Gastrocnemius medialis (tissue), 4 donors: ENCODE measurements at regions of chr6 and their contacts with region 1.

Region 1: GRCh38 chr6:111873178-111874024 is at the start of gene FYN:
- DNase-seq: peak; percentile 93 to 96
- ATAC-seq: peak; percentile 95 to 98
- H3K4me3 ChIP-seq: peak within 1 kb of the TSS; percentile 46 to 72 (median 62)
- H3K27ac ChIP-seq: peak within 1 kb of the TSS; percentile 36 to 79 (median 72)
- H3K4me1 ChIP-seq: peaks cover 4 to 5% of the 10 kb centered on the region in 2 donors
- H3K27me3 ChIP-seq: peaks cover 0 to 35% (median 15%) of the 10 kb centered on the region in 3 donors
- CTCF ChIP-seq: peak; percentile 51 to 64 (median 53)
- POLR2A ChIP-seq: peak; percentile 67 to 88
- total RNA-seq, gene FYN: 9.2 to 36.8 (median 17.0) TPM

Region 2: GRCh38 chr6:110873981-110874879 is 999.2 kb before region 1 on chr6 and contains the start of gene AMD1:
- in situ Hi-C with region 1: no loop called
- intact Hi-C with region 1: loop called (anchors 5 kb)
- DNase-seq: peak; percentile 98
- ATAC-seq: peak; percentile 71 to 79
- H3K4me3 ChIP-seq: peak within 1 kb of the TSS; percentile 79 to 94 (median 87)
- H3K27ac ChIP-seq: peak within 1 kb of the TSS; percentile 92 to 97 (median 96)
- H3K4me1 ChIP-seq: peaks cover 24 to 29% of the 10 kb centered on the region in 2 donors
- H3K27me3 ChIP-seq: no peaks in the 10 kb centered on the region
- CTCF ChIP-seq: no peak
- POLR2A ChIP-seq: peak; percentile 99
- total RNA-seq, gene AMD1: 33.5 to 57.1 (median 45.1) TPM

Region 3: DNA sequence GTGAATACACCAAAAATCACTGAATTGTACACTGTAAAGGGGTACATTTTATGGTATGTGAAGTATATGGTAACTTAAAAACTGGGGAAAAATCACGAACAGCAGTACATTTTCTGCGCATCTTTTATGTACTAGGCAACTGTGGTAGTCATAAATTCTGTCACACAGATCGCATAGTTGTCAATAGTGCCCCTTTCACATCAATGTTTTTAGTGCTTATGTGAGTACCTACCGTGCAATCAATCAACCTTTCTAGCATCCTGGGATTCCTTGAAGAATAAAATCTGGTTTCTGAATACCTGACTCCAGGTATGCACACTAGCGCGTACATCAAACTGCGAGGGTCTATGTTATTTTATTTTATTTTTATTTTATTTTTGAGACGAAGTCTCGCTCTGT is 892.2 kb before region 1 on chr6:
- in situ Hi-C with region 1: no loop called
- intact Hi-C with region 1: loop called (anchors 2 kb)
- DNase-seq: no peak
- ATAC-seq: no peak
- H3K4me3 ChIP-seq: peak overlapping the region; percentile 90 to 96 (median 93)
- H3K27ac ChIP-seq: peak overlapping the region; percentile 79 to 94 (median 89)
- H3K4me1 ChIP-seq: peaks cover 0 to 9% of the 10 kb centered on the region in 2 donors
- H3K27me3 ChIP-seq: no peaks in the 10 kb centered on the region
- CTCF ChIP-seq: no peak
- POLR2A ChIP-seq: no peak

Region 4: GRCh38 chr6:111709615-111710398 is 163.6 kb before region 1 on chr6:
- in situ Hi-C with region 1: no loop called
- intact Hi-C with region 1: loop called (anchors 1 kb)
- DNase-seq: peak; percentile 52 to 67
- ATAC-seq: peak; percentile 84 to 90
- H3K4me3 ChIP-seq: peak overlapping the region; percentile 30 to 48 (median 41)
- H3K27ac ChIP-seq: peak overlapping the region in 3 of 4 donors; percentile 57 to 67 (median 60)
- H3K4me1 ChIP-seq: peaks cover 28 to 31% of the 10 kb centered on the region in 2 donors
- H3K27me3 ChIP-seq: no peaks in the 10 kb centered on the region
- CTCF ChIP-seq: peak; percentile 73 to 83 (median 80)
- POLR2A ChIP-seq: no peak

Region 5: DNA sequence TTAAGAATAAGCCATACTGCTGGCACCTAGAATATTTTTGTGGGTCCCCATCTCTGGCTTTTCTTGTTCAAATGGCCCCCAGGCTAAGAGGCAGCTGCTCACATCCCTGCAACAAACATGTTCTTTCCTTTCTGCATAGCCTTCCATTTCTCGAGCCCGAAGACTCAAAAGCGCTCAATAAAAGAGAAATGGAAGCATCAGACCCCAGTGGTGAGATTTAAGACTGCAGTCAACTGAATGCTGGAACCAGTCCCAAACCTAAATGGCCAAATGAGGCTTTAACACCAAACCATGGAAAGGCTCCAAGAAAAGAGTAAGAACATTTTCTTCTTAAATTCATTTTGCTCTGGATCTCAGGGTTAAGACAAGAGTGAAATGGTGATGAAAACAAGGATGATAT is 145.6 kb before region 1 on chr6:
- in situ Hi-C with region 1: loop called in 1 of 4 experiments (anchors 25 kb)
- intact Hi-C with region 1: no loop called
- DNase-seq: no peak
- ATAC-seq: no peak
- H3K4me3 ChIP-seq: no peak overlapping the region
- H3K27ac ChIP-seq: no peak overlapping the region
- H3K4me1 ChIP-seq: peaks cover 5 to 12% of the 10 kb centered on the region in 2 donors
- H3K27me3 ChIP-seq: no peaks in the 10 kb centered on the region
- CTCF ChIP-seq: peak in 4 of 5 experiments; percentile 18 to 40 (median 27)
- POLR2A ChIP-seq: no peak

Region 6: GRCh38 chr6:111888928-111889695 is 15.7 kb after region 1 on chr6:
- in situ Hi-C with region 1: no loop called
- intact Hi-C with region 1: no loop called
- DNase-seq: no peak
- ATAC-seq: no peak
- H3K4me3 ChIP-seq: peak overlapping the region in 2 of 4 donors; percentile 17 to 24
- H3K27ac ChIP-seq: no peak overlapping the region
- H3K4me1 ChIP-seq: no peaks in the 10 kb centered on the region
- H3K27me3 ChIP-seq: no peaks in the 10 kb centered on the region
- CTCF ChIP-seq: no peak
- POLR2A ChIP-seq: no peak

Region 7: DNA sequence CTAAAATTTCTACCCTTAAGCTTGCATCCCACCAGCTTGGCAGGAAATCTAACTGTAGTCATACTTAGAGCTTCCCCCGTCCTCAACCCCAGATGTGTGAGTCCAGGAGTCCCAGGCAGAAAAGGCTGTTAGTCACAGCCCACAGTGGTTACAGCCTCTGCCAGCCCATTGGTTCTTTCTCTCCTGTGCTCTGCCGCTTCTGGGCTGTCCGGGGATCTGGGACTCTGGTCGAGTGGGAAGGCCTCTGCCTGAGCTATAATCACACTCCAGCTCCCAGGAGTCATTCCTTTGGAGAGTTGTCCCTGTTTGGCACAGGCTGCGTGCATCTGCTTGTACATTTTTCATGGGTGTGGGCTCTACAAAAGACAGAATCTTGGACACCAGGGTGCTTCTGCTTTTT is 45.4 kb after region 1 on chr6:
- in situ Hi-C with region 1: no loop called
- intact Hi-C with region 1: no loop called
- DNase-seq: peak in 1 of 2 donors; percentile 25
- ATAC-seq: peak; percentile 36
- H3K4me3 ChIP-seq: no peak overlapping the region
- H3K27ac ChIP-seq: no peak overlapping the region
- H3K4me1 ChIP-seq: no peaks in the 10 kb centered on the region
- H3K27me3 ChIP-seq: no peaks in the 10 kb centered on the region
- CTCF ChIP-seq: no peak
- POLR2A ChIP-seq: no peak

Region 8: DNA sequence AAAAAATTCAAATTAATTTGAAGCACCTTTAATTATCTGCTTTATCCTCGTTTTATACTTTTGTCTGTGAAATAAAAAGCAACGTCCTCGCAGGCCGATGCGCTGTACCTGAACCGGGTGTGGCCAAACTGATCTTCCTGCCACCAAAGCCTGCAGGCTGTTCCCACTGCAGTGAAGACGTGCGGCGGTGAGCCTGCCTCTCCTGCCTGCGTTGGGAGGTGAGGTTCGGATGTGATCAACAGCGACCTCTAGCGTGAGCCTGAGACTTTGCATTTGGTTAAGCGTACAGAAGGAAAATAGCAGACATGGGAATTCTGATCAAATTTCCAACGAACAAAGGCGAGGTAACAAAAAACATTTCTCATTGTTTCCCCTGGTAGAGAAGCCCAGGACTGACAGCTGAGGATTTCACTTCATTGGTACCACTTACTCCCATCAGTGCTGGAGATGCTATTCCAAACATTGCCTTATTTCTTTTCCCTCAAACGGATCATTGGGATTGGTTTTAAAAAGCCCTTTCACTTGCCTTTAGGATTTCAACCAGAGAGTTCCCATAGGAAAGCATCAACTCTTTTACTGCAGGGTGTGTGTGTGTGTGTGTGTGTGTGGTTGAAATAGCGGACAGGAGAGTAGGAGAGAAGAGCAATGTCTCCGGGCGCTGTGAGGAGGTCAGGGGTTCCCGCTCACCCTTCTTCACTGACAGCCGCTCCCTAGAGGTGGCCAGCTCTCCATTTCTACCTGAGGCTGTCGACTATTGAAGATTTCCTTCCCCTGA is 123.9 kb after region 1 on chr6:
- in situ Hi-C with region 1: no loop called
- intact Hi-C with region 1: loop called (anchors 5 kb)
- DNase-seq: peak; percentile 76 to 79
- ATAC-seq: peak; percentile 70 to 92
- H3K4me3 ChIP-seq: peak overlapping the region; percentile 8 to 39 (median 34)
- H3K27ac ChIP-seq: peak overlapping the region; percentile 21 to 64 (median 54)
- H3K4me1 ChIP-seq: peaks cover 0 to 8% of the 10 kb centered on the region in 2 donors
- H3K27me3 ChIP-seq: no peaks in the 10 kb centered on the region
- CTCF ChIP-seq: peak; percentile 84 to 93 (median 89)
- POLR2A ChIP-seq: no peak

Region 9: DNA sequence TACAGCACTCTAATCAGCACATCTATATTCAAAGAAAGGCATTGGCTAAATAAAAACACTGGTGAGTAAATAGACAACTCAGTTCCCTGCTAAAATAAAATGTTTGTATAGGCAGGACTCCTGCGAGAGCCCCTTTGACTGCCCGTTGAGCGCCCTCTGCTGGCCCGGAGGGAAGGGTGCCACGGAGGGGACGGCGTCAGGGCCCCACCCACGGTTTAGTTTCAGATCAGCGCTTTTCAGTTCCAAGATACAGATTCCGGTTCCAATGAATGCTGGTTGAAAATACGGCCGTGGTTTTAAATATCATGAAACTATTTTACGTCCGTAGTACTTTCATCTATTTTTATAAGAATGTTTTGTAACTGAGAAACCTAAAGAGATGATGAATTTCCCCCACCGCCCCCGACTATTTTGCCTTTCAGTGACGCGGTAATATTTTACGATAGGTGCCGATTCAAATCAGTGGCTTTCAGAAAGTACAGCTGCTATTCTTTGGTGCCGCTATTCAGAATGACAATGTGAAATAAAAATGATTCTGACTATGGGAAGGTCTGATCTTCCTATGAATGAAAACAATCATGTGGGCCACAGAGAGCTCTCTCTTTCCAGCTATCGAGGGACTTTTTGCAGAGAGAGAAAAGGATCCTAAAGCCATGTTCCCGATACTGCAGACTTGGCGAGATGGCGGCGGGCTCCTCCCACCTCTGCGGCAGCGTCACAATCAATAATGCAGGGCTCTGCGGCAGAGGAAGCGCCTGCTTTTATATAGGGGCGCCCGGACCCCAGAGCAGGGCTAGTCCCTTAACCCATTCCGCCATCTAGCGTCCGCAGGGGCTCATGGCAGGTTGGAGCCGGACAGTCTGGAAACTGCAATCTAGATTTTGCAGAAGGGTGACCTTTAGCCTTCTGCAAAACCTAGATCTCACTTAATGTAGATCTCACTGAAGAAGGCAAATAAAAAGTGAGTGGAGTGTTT is 169.9 kb after region 1 on chr6:
- in situ Hi-C with region 1: no loop called
- intact Hi-C with region 1: loop called (anchors 10 kb)
- DNase-seq: peak; percentile 53 to 68
- ATAC-seq: peak; percentile 86
- H3K4me3 ChIP-seq: peak overlapping the region; percentile 64 to 85 (median 67)
- H3K27ac ChIP-seq: peak overlapping the region; percentile 44 to 73 (median 66)
- H3K4me1 ChIP-seq: peaks cover 1 to 8% of the 10 kb centered on the region in 2 donors
- H3K27me3 ChIP-seq: no peaks in the 10 kb centered on the region
- CTCF ChIP-seq: peak; percentile 77 to 94 (median 87)
- POLR2A ChIP-seq: no peak

Region 10: DNA sequence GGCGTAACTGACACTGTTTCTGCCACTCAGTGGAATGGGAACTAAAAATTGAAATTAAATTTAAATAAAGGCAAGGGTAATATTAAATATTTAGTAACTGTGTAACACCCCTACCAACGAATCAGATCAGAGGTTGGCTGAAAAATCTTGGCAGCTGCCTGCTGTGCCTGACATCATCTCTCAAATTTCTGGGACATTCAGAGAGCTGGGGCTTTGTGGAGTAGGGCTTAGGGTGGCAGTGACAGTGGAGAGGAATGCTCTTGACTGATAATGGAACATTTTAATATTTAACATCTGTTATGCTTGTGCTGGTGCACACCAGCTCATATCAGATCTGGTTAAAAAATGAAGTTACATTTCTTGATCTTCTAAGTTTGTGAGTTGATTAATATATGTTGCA is 535.9 kb after region 1 on chr6:
- in situ Hi-C with region 1: no loop called
- intact Hi-C with region 1: no loop called
- DNase-seq: no peak
- ATAC-seq: no peak
- H3K4me3 ChIP-seq: no peak overlapping the region
- H3K27ac ChIP-seq: no peak overlapping the region
- H3K4me1 ChIP-seq: no peaks in the 10 kb centered on the region
- H3K27me3 ChIP-seq: no peaks in the 10 kb centered on the region
- CTCF ChIP-seq: no peak
- POLR2A ChIP-seq: no peak